ENCODE measurements at regions of chr19 and their contacts with region 1.

Region 1: DNA sequence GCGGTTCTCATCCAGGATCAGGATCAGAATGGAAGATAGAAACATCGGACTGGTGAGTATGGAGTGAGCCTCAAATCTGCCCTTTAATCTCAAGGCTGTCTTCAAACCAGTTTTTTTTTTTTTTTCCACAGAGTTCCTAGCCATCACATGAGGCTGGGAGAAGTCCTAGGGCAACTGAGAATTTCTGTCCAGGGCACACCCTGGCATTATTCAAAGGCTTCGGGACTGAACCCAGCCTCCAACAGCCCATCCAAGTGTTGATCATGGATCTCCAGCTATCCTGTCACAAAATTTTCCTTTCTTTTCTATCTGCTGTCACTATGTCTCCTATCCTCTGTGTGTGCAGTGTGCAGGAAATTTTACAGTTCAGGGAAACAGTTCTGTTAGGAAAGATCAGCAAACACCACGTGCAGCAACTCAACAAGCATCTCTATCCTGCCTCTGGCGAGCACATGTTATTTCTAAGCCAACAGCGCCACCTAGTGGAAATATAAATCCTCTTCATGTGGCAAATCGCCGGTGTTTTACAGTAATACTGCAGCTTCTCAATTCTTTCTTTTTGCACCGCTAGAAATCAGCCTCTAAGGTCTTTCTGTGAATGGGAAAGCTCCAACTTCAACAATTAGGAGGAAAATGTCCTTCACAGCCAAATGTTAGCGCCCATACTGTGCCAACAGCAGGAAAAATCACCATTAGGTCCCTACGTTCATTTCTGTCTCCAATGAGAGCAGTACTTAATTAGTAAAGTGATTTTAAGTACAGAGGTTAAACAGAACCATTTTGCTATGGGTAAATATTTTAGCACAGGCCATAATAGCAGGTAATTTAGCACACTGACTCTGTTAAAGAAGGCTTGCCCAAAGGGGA is 21.4 kb upstream of the ZNF181 start:
- DNase-seq: peak; percentile 64
- ATAC-seq: peak; percentile 70
- H3K4me3 Mint-ChIP-seq: no peak overlapping the region
- H3K27ac Mint-ChIP-seq: no peak overlapping the region
- H3K4me1 Mint-ChIP-seq: no peaks in the 10 kb centered on the region
- H3K27me3 Mint-ChIP-seq: peaks cover 24% of the 10 kb centered on the region

Region 2: GRCh38 chr19:34404109-34404897 is 308.3 kb before region 1 on chr19 and contains the start of gene PDCD2L:
- CTCF ChIA-PET with region 1: no interaction called
- POLR2A ChIA-PET with region 1: no interaction called
- intact Hi-C with region 1: loop called in 1 of 2 experiments (anchors 5 kb)
- DNase-seq: peak; percentile 97
- ATAC-seq: peak; percentile 95
- H3K4me3 Mint-ChIP-seq: peak within 1 kb of the TSS; percentile 83
- H3K27ac Mint-ChIP-seq: peak within 1 kb of the TSS; percentile 80
- H3K4me1 Mint-ChIP-seq: peaks cover 23% of the 10 kb centered on the region
- H3K27me3 Mint-ChIP-seq: no peaks in the 10 kb centered on the region
- total RNA-seq, gene PDCD2L: 31.0 to 35.2 TPM

Region 3: DNA sequence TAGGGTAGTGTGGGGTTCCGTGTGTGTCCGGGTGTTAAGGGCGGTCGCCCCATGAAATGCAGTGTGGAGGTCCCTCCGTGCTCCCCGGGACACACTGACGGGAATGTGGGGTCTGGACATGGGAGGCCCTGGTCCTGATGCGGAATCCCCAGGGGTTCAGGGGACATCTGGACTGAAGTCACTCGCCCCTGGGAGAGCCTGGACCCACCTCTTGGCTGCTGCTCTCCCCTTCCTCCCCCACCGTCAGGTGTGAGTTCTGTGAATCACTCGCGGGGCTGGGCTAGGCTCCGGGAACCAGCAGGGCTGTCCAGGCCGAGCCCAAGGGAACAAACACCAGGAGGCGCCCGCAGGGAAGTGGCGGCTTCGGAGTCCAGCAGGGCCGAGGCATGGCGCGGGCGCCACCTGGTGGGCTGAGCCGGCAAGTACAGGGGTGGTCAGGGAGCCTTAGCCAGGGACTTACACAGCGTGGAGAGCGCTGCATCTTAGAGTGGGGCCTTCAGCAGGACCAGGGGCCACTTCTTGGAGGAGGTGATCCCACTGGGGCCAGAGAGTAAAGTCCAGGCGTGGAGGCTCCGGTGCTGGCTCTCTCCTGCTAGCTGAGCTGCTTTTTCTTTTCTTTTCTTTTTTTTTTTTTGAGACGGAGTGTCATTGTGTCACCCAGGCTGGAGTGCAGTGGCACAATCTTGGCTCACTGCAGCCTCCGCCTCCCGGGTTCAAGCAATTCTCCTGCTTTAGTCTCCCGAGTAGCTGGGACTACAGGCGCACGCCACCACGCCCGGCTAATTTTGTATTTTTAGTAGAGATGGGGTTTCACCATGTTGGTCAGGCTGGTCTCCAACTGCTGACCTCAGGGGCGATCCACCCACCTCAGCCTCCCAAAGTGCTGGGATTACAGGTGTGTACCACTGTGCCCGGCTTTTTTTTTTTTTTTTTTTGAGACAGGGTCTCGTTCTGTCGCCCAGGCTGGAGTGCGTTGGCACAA is 211.0 kb before region 1 on chr19:
- CTCF ChIA-PET with region 1: interaction called, 4 read pairs
- POLR2A ChIA-PET with region 1: no interaction called
- intact Hi-C with region 1: loop called (anchors 1 to 5 kb)
- DNase-seq: peak; percentile 94
- ATAC-seq: peak; percentile 95
- H3K4me3 Mint-ChIP-seq: no peak overlapping the region
- H3K27ac Mint-ChIP-seq: no peak overlapping the region
- H3K4me1 Mint-ChIP-seq: peaks cover 6% of the 10 kb centered on the region
- H3K27me3 Mint-ChIP-seq: peaks cover 10% of the 10 kb centered on the region

Region 4: DNA sequence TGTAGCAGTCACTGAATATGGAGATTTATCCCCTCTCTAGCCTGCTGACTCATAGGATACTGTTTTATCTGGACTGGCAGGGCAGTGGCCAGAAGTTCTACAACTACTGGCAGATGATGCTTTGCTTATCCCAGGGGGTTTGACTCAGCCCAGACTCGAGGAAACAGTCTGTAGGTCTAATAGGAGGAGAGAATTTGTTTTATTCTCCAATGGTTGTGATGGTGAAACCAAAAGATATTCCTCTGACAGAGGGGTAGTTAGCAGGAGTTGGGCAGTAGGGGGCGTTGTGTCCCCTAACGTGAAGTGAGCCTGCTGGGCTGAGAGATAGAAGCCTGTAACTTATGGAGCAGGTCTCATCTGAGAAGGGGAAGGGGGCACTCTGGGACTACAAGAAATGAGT is 156.1 kb before region 1 on chr19:
- CTCF ChIA-PET with region 1: interaction called, 5 read pairs
- POLR2A ChIA-PET with region 1: no interaction called
- intact Hi-C with region 1: loop called in 1 of 2 experiments (anchors 1 kb)
- DNase-seq: peak; percentile 61
- ATAC-seq: peak; percentile 66
- H3K4me3 Mint-ChIP-seq: no peak overlapping the region
- H3K27ac Mint-ChIP-seq: no peak overlapping the region
- H3K4me1 Mint-ChIP-seq: no peaks in the 10 kb centered on the region
- H3K27me3 Mint-ChIP-seq: peaks cover 29% of the 10 kb centered on the region

Region 5: GRCh38 chr19:34639491-34640085 is 73.0 kb before region 1 on chr19:
- CTCF ChIA-PET with region 1: interaction called, 88 read pairs
- POLR2A ChIA-PET with region 1: no interaction called
- intact Hi-C with region 1: loop called (anchors 1 kb)
- DNase-seq: peak; percentile 74
- ATAC-seq: peak; percentile 64
- H3K4me3 Mint-ChIP-seq: no peak overlapping the region
- H3K27ac Mint-ChIP-seq: no peak overlapping the region
- H3K4me1 Mint-ChIP-seq: no peaks in the 10 kb centered on the region
- H3K27me3 Mint-ChIP-seq: no peaks in the 10 kb centered on the region